Tibial artery (tissue), 4 donors: ENCODE measurements at regions of chr13 and their contacts with region 1.

Region 1: DNA sequence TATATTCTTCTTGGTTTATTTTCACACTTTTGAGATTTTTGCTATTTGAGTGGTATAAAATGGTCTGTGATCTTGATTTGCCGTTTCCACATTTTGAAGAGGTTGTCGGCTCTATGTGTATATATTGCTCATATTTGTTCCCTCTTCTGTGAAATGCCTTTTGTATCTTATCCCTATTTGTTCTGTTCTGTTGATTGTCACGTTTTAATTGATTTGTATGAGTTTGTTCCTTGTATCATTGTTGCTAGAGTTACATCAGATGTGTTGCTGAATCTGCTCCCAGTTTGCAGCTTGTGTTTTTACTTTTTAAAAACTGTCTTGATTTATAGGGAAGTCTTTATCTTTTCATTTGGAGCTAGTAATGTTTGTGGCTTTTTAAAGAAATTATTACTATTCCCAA is 17.1 kb downstream of the USPL1 start:
- DNase-seq: no peak
- H3K4me3 ChIP-seq: no peak overlapping the region
- H3K27ac ChIP-seq: no peak overlapping the region
- H3K4me1 ChIP-seq: peaks cover 0 to 25% (median 5%) of the 10 kb centered on the region in 4 donors
- H3K27me3 ChIP-seq: no peaks in the 10 kb centered on the region
- CTCF ChIP-seq: no peak

Region 2: DNA sequence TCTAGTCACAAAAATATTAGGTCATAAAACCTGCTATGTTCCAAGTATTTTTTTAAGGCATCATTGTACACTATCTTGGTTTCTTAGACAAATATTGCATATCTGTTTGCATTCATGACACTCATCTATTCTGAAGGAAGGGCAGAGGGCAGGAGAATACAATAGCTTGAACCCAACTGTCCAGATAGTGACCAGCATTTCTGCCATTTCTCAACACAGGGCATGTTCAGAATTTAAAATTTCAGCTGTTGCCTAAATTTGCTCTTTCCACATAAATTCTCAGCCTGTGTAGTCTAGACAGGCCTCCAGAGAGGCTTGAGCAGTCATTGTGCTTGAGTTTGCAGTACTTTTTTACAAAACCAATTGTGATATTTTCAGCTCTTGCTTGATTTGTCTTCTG is 1560.9 kb after region 1 on chr13:
- intact Hi-C with region 1: loop called (anchors 5 kb)
- DNase-seq: no peak
- H3K4me3 ChIP-seq: no peak overlapping the region
- H3K27ac ChIP-seq: peak overlapping the region in 1 of 2 donors; percentile 7
- H3K4me1 ChIP-seq: peaks cover 0 to 15% (median 5%) of the 10 kb centered on the region in 4 donors
- H3K27me3 ChIP-seq: no peaks in the 10 kb centered on the region
- CTCF ChIP-seq: no peak